ENCODE measurements at regions of chr18 and their contacts with region 1.

Region 1: DNA sequence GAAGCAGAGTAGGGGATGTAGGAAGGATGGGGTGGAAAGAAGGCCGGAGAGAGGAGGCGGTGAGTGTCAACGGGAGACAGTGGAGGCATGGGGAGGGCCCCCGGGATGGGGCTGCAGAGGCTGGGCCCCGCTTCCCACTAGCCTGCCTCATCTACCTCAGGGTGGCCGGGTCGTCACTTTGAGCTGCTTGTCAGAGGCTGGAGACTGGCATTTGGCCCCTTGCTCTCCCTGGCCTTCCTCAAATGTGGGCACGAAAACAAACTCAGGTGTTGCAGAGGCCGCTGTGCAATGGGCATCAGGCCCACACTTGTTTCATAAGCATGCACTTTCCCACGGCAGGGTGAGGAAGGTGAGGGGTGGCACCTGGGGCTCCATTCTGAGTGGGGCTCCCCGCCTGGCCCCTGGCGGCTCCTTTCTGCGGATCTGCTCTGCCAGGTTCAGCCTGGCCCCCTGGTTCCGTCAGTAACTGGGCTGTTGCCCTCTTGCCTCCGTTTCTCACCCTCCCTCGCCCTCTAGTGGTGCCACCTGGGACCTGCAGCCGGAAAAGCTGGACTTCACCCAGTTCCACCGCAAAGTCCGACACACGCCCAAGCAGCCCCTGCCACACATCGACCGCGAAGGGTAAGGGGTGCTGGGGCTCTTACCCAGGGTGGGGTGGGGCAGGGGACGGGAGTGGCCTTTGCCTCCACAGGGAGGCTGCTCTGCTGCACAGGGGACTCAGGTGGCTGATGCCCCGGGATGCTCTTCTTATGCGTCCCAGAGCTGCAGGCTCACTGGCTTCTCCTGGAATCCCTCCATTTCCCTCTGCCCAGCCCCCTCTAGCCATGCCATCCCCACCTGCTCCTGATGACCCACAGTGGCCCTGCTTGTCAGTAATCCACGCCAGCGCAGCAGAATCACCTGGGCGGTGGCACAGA is 125.4 kb downstream of the CTIF start:
- DNase-seq: no peak
- H3K4me3 ChIP-seq: no peak overlapping the region
- CTCF ChIP-seq: peak; percentile 90

Region 2: DNA sequence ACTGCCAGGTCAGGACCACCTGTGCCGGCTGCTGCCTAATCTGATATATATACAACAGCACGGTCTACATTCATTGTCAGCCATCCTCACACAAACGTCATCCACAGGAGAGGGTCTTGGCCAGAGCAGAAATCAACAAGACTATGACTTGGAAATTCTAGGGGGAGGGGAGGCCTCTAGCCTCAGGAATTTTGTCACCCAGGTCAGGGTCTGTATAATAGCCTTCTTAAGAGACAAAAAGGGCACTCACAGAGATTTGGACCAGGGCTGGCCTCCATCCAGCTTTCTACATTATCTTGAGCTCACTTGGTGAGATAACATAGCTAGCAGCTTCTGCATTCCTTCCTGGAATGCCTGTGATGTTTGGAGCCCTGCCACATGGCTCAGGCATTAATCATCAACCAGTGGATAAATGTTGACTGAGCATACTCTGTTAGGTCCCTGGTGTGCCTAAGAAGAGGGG is 175.8 kb before region 1 on chr18:
- CTCF ChIA-PET with region 1: interaction called, 22 read pairs
- POLR2A ChIA-PET with region 1: no interaction called
- DNase-seq: peak; percentile 73
- H3K4me3 ChIP-seq: no peak overlapping the region
- CTCF ChIP-seq: no peak

Region 3: GRCh38 chr18:48709371-48710062 is 45.3 kb after region 1 on chr18:
- CTCF ChIA-PET with region 1: no interaction called
- POLR2A ChIA-PET with region 1: no interaction called
- DNase-seq: no peak
- H3K4me3 ChIP-seq: no peak overlapping the region
- CTCF ChIP-seq: no peak